Dendritic cell treated with granulocyte-macrophage colony-stimulating factor and Interleukin-4, amounts not matched to agents 40 ng/mL and 50 ng/mL, for 4 days (primary cell): ENCODE measurements at regions of chr1 and their contacts with region 1.

Region 1: DNA sequence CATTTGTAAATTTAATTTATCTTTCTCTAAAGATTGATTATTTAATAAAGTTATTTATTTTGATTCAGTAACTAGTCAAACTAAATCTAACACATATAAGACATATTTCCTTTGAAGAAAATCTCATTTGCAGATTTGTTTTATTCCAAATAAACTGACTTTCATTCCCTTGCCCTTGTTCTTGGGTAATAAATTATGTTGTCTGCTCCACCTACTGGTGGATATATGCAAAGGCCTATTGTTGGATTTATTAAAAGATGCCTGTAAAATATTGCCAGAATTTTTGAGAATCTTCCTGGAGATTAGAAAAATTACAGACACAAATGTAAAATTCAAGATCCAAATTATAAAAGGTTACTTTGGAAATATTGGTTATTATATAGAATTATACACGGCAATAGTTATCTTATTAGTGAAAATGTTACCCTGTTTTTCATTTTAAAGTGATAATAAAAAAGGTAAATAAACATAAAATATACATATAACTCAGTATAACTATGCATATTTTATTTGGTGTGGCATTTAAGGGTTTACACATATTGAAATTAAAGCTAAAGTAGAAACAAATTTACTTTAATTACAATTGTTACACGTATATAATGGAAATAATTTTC is 116.1 kb downstream of the SPATA17 start:
- H3K4me3 Mint-ChIP-seq: no peak overlapping the region
- H3K27ac Mint-ChIP-seq: no peak overlapping the region
- H3K4me1 Mint-ChIP-seq: no peaks in the 10 kb centered on the region
- H3K27me3 Mint-ChIP-seq: no peaks in the 10 kb centered on the region

Region 2: DNA sequence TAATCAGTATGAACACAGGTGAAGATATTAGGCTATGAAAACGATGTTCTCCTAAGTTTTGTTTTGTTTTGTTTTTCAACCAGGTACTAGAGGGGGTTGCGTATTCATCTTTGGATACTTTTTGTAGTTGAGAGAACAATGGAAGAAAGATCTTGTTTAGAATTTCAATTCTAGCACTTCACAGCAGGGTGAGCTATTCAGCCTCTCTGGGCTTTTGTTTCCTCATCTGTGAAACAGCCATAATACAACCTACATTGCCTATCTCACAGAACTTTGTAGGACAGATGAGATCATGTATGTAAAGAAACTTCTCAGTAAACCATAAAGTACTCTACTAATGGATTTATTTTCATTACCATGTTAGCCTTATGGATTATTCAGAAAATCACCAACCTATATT is 315.9 kb before region 1 on chr1:
- intact Hi-C with region 1: loop called (anchors 5 kb)
- H3K4me3 Mint-ChIP-seq: no peak overlapping the region
- H3K27ac Mint-ChIP-seq: no peak overlapping the region
- H3K4me1 Mint-ChIP-seq: no peaks in the 10 kb centered on the region
- H3K27me3 Mint-ChIP-seq: no peaks in the 10 kb centered on the region

Region 3: DNA sequence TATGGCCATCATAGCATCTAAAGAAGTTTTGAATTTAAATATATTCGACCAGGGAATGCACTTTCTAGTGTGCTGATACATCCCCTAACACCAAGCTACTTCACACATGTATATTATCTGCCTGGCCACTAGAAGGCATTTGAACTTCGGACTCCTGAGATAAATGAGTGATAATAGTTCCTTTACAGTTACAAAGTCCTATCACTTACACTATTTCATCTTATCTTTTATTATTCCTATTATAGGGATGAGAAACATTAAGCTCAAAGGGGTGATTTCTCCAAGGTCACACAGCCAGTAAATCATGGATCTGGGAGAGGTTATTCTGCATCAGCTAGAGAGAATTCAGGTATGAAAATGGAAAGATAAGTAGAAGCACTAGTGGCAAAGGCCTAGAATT is 156.7 kb before region 1 on chr1:
- intact Hi-C with region 1: loop called (anchors 10 kb)
- H3K4me3 Mint-ChIP-seq: no peak overlapping the region
- H3K27ac Mint-ChIP-seq: no peak overlapping the region
- H3K4me1 Mint-ChIP-seq: peaks cover 6% of the 10 kb centered on the region
- H3K27me3 Mint-ChIP-seq: no peaks in the 10 kb centered on the region